Activated CD8-positive, alpha-beta T cell treated with anti-CD3 and anti-CD28 coated beads for 36 hours (primary cell): ENCODE measurements at regions of chr4 and their contacts with region 1.

Region 1: DNA sequence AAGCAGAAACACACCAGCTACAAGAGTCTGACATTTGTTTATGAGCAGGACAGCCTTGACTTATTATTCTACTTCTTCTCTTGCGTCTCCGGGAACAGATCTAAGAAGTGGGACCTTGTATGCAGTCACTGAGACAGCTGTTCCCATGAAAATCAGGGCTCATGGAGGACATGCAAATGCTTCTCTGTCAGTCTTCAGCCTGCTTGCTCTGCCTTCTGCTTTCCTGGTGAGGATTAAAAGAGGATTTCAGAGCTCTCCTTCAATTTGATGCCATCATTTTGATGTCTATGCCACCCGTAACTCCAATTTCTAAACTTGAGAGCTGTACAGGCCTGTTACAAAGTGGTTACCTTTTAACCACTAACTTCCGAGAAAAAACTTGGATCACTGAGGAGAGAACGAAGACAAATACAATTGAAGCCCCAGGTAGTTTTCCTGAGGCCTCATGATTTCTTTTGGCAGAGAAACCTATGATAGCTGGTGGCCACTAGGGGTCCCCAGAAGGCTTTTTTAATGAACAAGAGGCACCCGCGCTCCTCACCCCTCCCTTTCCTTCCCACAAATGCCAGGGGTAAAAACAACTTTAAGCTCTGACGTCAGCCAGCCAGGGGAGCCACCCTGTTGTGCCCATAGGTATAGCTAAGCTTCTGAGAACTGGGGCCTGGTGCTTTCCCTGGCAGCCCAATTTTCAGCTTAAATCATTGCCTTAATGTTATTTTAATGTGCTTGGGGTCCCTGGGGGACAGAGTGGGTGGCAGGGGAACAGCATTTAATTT is 97.0 kb downstream of the DDIT4L start:
- DNase-seq: peak; percentile 97
- ATAC-seq: peak; percentile 96
- H3K4me3 Mint-ChIP-seq: peak overlapping the region; percentile 43
- H3K27ac Mint-ChIP-seq: peak overlapping the region; percentile 94
- H3K4me1 Mint-ChIP-seq: peaks cover 56% of the 10 kb centered on the region
- H3K27me3 Mint-ChIP-seq: peaks cover 3% of the 10 kb centered on the region
- CTCF ChIP-seq: peak; percentile 73

Region 2: GRCh38 chr4:99915449-99915848 is 177.8 kb before region 1 on chr4:
- CTCF ChIA-PET with region 1: no interaction called
- POLR2A ChIA-PET with region 1: no interaction called
- intact Hi-C with region 1: no loop called
- DNase-seq: no peak
- ATAC-seq: no peak
- H3K4me3 Mint-ChIP-seq: no peak overlapping the region
- H3K27ac Mint-ChIP-seq: peak overlapping the region; percentile 13
- H3K4me1 Mint-ChIP-seq: peaks cover 21% of the 10 kb centered on the region
- H3K27me3 Mint-ChIP-seq: no peaks in the 10 kb centered on the region
- CTCF ChIP-seq: no peak

Region 3: DNA sequence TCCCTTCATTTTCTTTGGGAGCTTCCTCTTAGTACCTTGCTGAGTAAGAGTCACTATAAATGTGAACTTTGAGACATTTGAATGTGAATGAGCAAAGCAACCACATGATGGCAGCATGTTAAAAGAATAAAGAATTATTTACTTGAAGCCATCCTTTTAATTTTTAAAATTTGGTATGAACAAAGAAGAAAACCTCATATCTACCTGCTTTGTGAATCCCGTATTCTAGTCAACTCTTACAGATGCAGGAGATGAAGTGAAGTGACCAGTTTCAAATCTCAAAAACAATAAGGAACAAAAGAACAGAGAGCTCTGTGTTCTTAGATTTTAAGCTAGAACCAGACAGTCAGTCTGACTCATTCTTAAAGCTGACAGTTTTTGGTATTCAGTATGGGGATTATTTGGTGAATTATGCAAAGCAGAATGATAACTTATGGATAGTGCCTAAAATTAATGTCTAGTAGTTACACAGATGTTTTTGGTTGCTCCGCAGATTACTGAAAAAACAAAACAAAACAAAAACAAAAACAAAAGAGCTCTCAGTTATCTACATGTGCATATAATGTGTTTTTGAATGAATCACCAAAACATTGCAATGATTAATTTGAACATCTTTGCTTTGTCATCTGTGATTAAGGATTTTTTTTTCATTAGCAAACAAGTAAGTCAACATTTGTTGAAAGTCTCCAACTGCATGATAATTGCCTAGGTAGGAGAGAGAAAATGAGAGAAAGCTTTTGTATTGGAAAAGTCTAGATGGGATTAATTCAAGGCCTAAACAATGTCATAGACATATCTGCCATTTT is 95.0 kb before region 1 on chr4:
- CTCF ChIA-PET with region 1: interaction called, 16 read pairs
- POLR2A ChIA-PET with region 1: no interaction called
- intact Hi-C with region 1: no loop called
- DNase-seq: peak; percentile 2
- ATAC-seq: no peak
- H3K4me3 Mint-ChIP-seq: no peak overlapping the region
- H3K27ac Mint-ChIP-seq: no peak overlapping the region
- H3K4me1 Mint-ChIP-seq: peaks cover 2% of the 10 kb centered on the region
- H3K27me3 Mint-ChIP-seq: no peaks in the 10 kb centered on the region
- CTCF ChIP-seq: peak; percentile 43

Region 4: GRCh38 chr4:100076743-100077142 is 16.5 kb before region 1 on chr4:
- CTCF ChIA-PET with region 1: interaction called, 45 read pairs
- POLR2A ChIA-PET with region 1: interaction called, 3 read pairs
- intact Hi-C with region 1: no loop called
- DNase-seq: peak; percentile 12
- ATAC-seq: peak; percentile 82
- H3K4me3 Mint-ChIP-seq: no peak overlapping the region
- H3K27ac Mint-ChIP-seq: no peak overlapping the region
- H3K4me1 Mint-ChIP-seq: peaks cover 16% of the 10 kb centered on the region
- H3K27me3 Mint-ChIP-seq: peaks cover 13% of the 10 kb centered on the region
- CTCF ChIP-seq: no peak

Region 5: DNA sequence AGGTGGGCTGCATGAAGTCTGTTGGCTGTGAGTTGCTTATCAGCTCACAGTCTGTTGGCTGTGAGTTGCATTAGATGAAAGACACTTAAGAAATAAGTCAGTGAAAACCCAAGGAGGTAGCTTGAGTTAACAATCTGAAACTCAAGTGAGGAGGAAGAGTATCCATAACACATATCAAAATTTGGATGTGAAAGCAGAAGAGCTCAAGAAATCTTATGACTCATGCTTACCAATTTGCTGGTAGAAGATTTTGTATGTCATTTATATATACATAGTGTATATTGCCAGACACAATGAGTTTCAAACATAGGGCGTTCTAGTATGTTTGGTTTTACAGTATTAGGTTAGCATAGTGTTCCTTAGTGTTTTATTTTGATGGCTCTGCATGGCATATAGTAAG is 10.4 kb before region 1 on chr4:
- CTCF ChIA-PET with region 1: interaction called, 45 read pairs
- POLR2A ChIA-PET with region 1: interaction called, 7 read pairs
- intact Hi-C with region 1: no loop called
- DNase-seq: no peak
- ATAC-seq: peak; percentile 65
- H3K4me3 Mint-ChIP-seq: no peak overlapping the region
- H3K27ac Mint-ChIP-seq: peak overlapping the region; percentile 47
- H3K4me1 Mint-ChIP-seq: peaks cover 44% of the 10 kb centered on the region
- H3K27me3 Mint-ChIP-seq: peaks cover 1% of the 10 kb centered on the region
- CTCF ChIP-seq: no peak

Region 6: DNA sequence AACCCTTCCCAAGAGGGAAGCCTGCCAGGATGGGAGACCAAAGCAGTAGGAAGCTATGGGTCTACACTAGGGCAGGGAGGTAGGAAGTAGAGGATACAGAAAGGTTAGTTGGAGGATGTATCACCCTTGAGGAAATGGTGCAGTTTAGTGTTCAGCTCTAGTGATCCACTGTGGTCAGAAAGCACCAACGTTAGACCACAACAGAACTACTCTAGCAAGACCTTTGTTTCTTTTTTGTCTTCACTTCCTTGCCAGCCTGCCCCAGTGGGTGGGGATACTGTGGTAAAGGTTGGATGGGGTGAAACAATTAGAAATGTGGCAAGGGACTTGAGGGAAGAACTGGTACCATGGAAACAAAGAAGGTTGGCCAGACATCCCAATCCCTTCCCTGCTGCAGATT is 13.7 kb after region 1 on chr4:
- CTCF ChIA-PET with region 1: interaction called, 72 read pairs
- POLR2A ChIA-PET with region 1: interaction called, 3 read pairs
- intact Hi-C with region 1: no loop called
- DNase-seq: peak; percentile 64
- ATAC-seq: peak; percentile 89
- H3K4me3 Mint-ChIP-seq: no peak overlapping the region
- H3K27ac Mint-ChIP-seq: peak overlapping the region; percentile 64
- H3K4me1 Mint-ChIP-seq: peaks cover 23% of the 10 kb centered on the region
- H3K27me3 Mint-ChIP-seq: no peaks in the 10 kb centered on the region
- CTCF ChIP-seq: no peak

Region 7: GRCh38 chr4:101730291-101731117 is 1637.2 kb after region 1 on chr4:
- CTCF ChIA-PET with region 1: interaction called, 12 read pairs
- POLR2A ChIA-PET with region 1: no interaction called
- intact Hi-C with region 1: no loop called
- DNase-seq: peak; percentile 73
- ATAC-seq: peak; percentile 74
- H3K4me3 Mint-ChIP-seq: no peak overlapping the region
- H3K27ac Mint-ChIP-seq: no peak overlapping the region
- H3K4me1 Mint-ChIP-seq: no peaks in the 10 kb centered on the region
- H3K27me3 Mint-ChIP-seq: peaks cover 9% of the 10 kb centered on the region
- CTCF ChIP-seq: peak; percentile 61